Esophagus muscularis mucosa (tissue), 4 donors: ENCODE measurements at regions of chr6 and their contacts with region 1.

Region 1: DNA sequence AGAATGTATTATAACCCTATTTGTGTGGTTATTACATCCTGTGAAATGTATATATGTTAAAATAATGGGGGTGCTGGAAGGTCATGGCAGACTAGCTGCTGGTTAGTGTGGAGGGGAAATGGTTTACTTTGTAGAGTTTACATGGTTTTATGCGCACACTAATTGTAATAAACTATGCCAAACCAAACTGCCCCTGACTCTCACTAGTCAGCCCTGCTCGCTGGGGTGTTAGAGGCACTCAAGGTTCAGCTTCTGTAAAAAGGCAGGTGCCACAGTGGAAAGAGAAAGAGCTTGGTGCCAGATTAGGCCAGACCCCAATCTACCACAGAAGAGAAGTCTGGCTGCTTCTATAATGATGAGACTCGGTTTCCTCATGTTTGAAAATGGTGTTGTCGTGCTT is 52.7 kb downstream of the GOPC start:
- DNase-seq: no peak
- H3K4me3 ChIP-seq: no peak overlapping the region
- H3K27ac ChIP-seq: no peak overlapping the region
- H3K4me1 ChIP-seq: peaks cover 9 to 15% (median 14%) of the 10 kb centered on the region in 4 donors
- H3K27me3 ChIP-seq: no peaks in the 10 kb centered on the region
- CTCF ChIP-seq: no peak
- EP300 ChIP-seq: no peak
- POLR2A ChIP-seq: no peak

Region 2: GRCh38 chr6:117487821-117488220 is 61.8 kb before region 1 on chr6:
- intact Hi-C with region 1: loop called (anchors 5 kb)
- DNase-seq: no peak
- H3K4me3 ChIP-seq: no peak overlapping the region
- H3K27ac ChIP-seq: peak overlapping the region in 1 of 4 donors; percentile 13
- H3K4me1 ChIP-seq: peaks cover 12 to 16% (median 15%) of the 10 kb centered on the region in 4 donors
- H3K27me3 ChIP-seq: no peaks in the 10 kb centered on the region
- CTCF ChIP-seq: no peak
- EP300 ChIP-seq: no peak
- POLR2A ChIP-seq: no peak

Region 3: DNA sequence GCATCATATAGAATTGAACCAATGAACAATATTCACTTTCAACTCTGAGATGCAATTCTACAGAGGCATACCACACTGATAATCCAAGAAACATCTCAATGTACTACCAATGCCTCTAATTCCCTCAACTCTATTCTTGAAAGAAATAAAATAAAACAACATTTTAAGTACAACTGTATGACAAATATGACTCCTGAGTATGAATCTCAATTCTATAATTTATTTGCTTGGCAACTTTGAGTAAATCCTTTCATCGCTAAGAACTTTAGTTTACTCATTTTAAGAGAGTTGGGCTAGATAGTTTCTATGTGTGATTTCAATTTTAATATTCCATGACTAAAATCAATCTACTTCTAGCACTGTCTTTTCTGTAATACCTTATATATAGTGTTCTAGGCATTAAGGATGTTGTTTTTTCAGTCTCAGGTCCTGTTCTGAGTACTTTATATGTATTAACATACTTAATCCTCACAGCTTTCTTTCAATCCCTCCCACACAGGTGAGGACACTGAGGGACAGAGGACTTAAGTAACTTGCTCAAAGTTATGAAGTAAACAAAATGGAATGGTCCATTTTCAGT is 19.3 kb after region 1 on chr6:
- intact Hi-C with region 1: no loop called
- DNase-seq: no peak
- H3K4me3 ChIP-seq: no peak overlapping the region
- H3K27ac ChIP-seq: no peak overlapping the region
- H3K4me1 ChIP-seq: no peaks in the 10 kb centered on the region
- H3K27me3 ChIP-seq: no peaks in the 10 kb centered on the region
- CTCF ChIP-seq: no peak
- EP300 ChIP-seq: no peak
- POLR2A ChIP-seq: no peak

Region 4: DNA sequence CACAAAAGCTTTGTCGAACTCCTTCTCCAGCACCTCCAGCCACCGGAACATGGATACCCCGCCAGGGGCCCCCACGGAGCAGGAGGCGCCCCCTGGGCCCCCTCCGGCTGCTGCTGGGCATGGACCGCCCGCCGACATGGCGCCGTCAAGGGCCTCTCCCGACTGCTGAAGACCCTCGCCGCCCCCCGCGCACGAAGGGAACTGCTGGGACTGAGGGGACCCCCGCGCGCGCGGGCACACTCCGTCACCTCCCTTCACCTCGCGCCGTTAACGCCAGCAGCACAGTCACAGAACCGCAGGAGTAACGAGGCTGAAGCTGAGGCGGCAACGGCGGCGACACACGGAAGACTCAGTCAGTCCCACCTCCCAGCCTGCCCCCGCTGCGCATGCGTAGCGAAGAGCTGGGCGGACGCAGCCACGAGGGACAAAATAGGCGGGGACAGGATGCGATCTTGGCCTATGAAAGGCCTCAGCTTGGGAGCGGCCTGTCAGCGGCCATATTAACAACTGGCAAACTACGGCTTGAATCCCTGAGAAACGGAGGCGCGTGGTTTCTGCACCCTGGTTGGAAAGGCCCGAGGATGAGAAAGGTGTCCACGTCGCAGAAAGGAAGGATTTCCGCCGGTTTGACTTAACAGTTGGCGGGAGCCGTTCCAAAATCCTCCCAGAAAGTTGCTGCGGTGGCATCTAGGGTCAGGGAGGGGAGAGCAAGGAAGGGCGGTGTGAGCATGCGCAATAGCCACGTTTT is 52.7 kb after region 1 on chr6 and contains the start of gene GOPC:
- intact Hi-C with region 1: loop called (anchors 5 kb)
- DNase-seq: peak; percentile 98
- H3K4me3 ChIP-seq: peak within 1 kb of the TSS; percentile 76 to 97 (median 82)
- H3K27ac ChIP-seq: peak within 1 kb of the TSS; percentile 86 to 93 (median 90)
- H3K4me1 ChIP-seq: peaks cover 21 to 39% (median 29%) of the 10 kb centered on the region in 4 donors
- H3K27me3 ChIP-seq: no peaks in the 10 kb centered on the region
- CTCF ChIP-seq: no peak
- EP300 ChIP-seq: no peak
- POLR2A ChIP-seq: peak; percentile 34
- total RNA-seq, gene GOPC: 18.8 to 25.7 (median 22.8) TPM